Esophagus muscularis mucosa (tissue), 4 donors: ENCODE measurements at regions of chr1 and their contacts with region 1.

Region 1: GRCh38 chr1:10032590-10033358 is at the start of gene UBE4B:
- DNase-seq: peak; percentile 100
- H3K4me3 ChIP-seq: peak within 1 kb of the TSS; percentile 82 to 99 (median 85)
- H3K27ac ChIP-seq: peak within 1 kb of the TSS; percentile 94 to 98 (median 96)
- H3K4me1 ChIP-seq: peaks cover 19 to 48% (median 41%) of the 10 kb centered on the region in 4 donors
- H3K27me3 ChIP-seq: no peaks in the 10 kb centered on the region
- CTCF ChIP-seq: peak; percentile 86 to 89 (median 86)
- EP300 ChIP-seq: no peak
- POLR2A ChIP-seq: no peak
- total RNA-seq, gene UBE4B: 58.6 to 110 (median 85.5) TPM

Region 2: DNA sequence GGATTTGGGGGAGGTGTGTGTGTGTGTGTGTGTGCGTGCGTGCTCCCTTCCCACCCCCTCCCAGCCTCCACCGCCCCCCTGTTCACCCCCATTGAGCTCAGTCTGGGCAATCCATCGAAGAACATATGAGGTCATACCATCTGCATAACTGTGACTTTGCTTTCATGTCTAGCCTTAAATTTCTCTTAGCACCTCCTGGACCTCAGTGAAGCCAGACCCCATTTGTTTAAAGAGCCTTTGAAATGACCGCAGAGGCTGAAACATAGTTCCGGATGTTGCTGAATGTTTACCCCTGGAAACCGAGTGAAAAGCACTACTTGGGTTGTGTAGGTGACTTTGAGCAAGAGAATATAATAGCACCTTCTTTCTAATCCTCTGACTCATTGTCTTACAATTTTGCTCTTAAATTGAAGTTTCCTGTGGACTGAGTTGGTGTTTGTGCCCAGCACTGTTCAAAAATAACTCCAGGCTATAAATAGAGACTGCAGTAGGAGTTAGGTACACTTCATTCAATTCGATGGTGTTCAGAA is 75.4 kb after region 1 on chr1:
- intact Hi-C with region 1: loop called (anchors 5 kb)
- DNase-seq: no peak
- H3K4me3 ChIP-seq: peak overlapping the region in 3 of 4 donors; percentile 5 to 17 (median 11)
- H3K27ac ChIP-seq: peak overlapping the region; percentile 82 to 90 (median 84)
- H3K4me1 ChIP-seq: peaks cover 29 to 56% (median 46%) of the 10 kb centered on the region in 4 donors
- H3K27me3 ChIP-seq: no peaks in the 10 kb centered on the region
- CTCF ChIP-seq: no peak
- EP300 ChIP-seq: no peak
- POLR2A ChIP-seq: no peak

Region 3: GRCh38 chr1:10161541-10162290 is 128.9 kb after region 1 on chr1:
- intact Hi-C with region 1: loop called (anchors 5 kb)
- DNase-seq: no peak
- H3K4me3 ChIP-seq: no peak overlapping the region
- H3K27ac ChIP-seq: peak overlapping the region; percentile 57 to 82 (median 72)
- H3K4me1 ChIP-seq: peaks cover 6 to 26% (median 25%) of the 10 kb centered on the region in 4 donors
- H3K27me3 ChIP-seq: no peaks in the 10 kb centered on the region
- CTCF ChIP-seq: no peak
- EP300 ChIP-seq: peak; percentile 16
- POLR2A ChIP-seq: no peak

Region 4: DNA sequence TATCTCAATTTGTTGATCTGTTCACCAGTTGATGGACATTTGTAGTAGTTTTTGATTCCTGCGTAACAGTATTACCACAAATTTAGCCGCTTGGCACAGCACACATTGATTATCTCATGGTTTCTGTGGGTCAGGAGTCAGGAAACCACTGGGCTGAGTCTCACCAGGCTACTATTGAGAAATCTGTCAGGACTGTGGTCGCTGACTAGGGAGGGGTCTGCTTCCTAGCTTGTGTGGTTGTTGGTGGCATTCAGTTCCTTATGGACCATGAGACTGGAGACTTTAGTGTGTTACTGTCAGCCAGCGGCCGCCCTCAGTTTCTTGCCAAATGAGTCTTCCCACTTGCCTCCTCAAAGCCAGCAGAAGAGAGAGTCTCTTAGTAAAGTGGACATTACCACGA is 451.7 kb after region 1 on chr1:
- intact Hi-C with region 1: no loop called
- DNase-seq: no peak
- H3K4me3 ChIP-seq: no peak overlapping the region
- H3K27ac ChIP-seq: no peak overlapping the region
- H3K4me1 ChIP-seq: no peaks in the 10 kb centered on the region
- H3K27me3 ChIP-seq: no peaks in the 10 kb centered on the region
- CTCF ChIP-seq: no peak
- EP300 ChIP-seq: no peak
- POLR2A ChIP-seq: no peak